ENCODE measurements at regions of chrX and their contacts with region 1.

Region 1: GRCh38 chrX:23901805-23902204 is 5.9 kb downstream of the APOO start:
- DNase-seq: peak; percentile 61
- H3K4me3 Mint-ChIP-seq: no peak overlapping the region
- H3K27ac Mint-ChIP-seq: no peak overlapping the region
- H3K4me1 Mint-ChIP-seq: peaks cover 11% of the 10 kb centered on the region
- H3K27me3 Mint-ChIP-seq: no peaks in the 10 kb centered on the region

Region 2: GRCh38 chrX:23694606-23695005 is 207.2 kb before region 1 on chrX:
- CTCF ChIA-PET with region 1: interaction called, 62 read pairs
- intact Hi-C with region 1: loop called (anchors 1 kb)
- DNase-seq: peak; percentile 55
- H3K4me3 Mint-ChIP-seq: no peak overlapping the region
- H3K27ac Mint-ChIP-seq: no peak overlapping the region
- H3K4me1 Mint-ChIP-seq: peaks cover 3% of the 10 kb centered on the region
- H3K27me3 Mint-ChIP-seq: no peaks in the 10 kb centered on the region

Region 3: DNA sequence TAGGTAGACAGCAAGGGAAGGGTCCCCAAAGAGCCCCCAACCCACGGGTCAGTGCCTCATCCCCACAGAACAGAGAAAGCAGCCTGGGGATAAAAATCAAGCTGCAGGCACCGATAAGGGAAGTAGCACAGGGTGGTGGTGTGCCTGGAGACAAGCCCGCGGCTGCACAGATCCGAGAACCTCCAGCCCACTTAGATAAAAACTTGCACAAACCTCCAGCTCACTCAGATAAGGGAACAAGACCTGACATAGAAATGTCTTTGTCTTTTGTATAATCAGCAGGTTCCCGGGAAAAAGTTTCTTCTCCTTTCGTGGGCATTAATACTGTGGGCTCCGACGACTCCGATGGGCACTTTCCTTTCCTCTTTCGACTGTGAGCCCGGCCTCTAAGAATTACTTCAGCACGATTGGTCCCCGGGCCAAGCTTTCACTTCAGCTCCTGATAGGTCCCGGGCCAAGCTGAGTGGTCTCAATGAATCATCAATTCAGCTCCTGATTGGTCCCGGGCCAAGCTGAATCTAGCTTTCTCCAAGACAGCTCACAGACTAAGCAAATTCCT is 202.1 kb before region 1 on chrX:
- CTCF ChIA-PET with region 1: interaction called, 54 read pairs
- intact Hi-C with region 1: loop called (anchors 1 kb)
- DNase-seq: peak; percentile 28
- H3K4me3 Mint-ChIP-seq: peak overlapping the region; percentile 53
- H3K27ac Mint-ChIP-seq: no peak overlapping the region
- H3K4me1 Mint-ChIP-seq: peaks cover 6% of the 10 kb centered on the region
- H3K27me3 Mint-ChIP-seq: no peaks in the 10 kb centered on the region

Region 4: GRCh38 chrX:23811108-23811651 is 90.6 kb before region 1 on chrX:
- CTCF ChIA-PET with region 1: interaction called, 3 read pairs
- intact Hi-C with region 1: loop called (anchors 1 kb)
- DNase-seq: peak; percentile 12
- H3K4me3 Mint-ChIP-seq: peak overlapping the region; percentile 6
- H3K27ac Mint-ChIP-seq: no peak overlapping the region
- H3K4me1 Mint-ChIP-seq: peaks cover 8% of the 10 kb centered on the region
- H3K27me3 Mint-ChIP-seq: no peaks in the 10 kb centered on the region

Region 5: DNA sequence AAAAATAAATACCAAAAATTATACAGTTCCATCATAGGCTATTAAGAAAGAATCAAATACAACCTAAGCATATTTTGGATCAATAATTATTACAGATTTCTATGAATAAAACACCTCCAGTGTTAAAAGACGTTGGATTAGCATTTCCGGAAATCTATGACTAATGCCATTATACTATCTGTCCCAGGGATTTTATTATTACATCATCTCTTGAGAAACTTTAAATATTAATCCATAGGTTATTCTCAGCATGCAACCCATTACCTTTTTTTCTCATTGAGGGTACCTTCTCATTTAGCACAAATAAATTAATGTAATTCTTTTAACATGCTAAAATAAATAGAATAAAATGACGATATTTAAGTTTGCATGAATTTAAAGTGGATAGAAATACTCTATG is 50.6 kb after region 1 on chrX:
- CTCF ChIA-PET with region 1: no interaction called
- intact Hi-C with region 1: no loop called
- DNase-seq: no peak
- H3K4me3 Mint-ChIP-seq: peak overlapping the region; percentile 18
- H3K27ac Mint-ChIP-seq: no peak overlapping the region
- H3K4me1 Mint-ChIP-seq: peaks cover 16% of the 10 kb centered on the region
- H3K27me3 Mint-ChIP-seq: no peaks in the 10 kb centered on the region

Region 6: DNA sequence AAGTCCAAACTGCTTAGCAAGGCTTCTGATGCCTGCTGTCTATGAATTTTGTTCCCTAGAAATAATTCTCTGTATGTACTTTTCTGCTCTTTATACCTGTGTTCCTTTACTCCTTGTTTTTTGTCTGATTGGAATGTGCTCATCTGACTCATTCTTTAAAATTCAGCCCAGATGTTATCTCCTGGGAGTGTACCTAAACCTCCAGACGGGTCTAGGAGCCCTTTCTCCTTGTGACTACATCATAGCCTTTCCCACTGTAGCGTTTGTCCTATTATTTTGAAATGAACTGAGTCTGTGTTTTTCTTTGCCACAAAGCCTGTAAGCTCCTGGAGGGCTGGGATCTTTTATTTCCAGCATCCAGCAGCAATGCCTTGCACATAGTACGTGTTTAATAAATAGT is 818.2 kb after region 1 on chrX:
- CTCF ChIA-PET with region 1: no interaction called
- intact Hi-C with region 1: no loop called
- DNase-seq: no peak
- H3K4me3 Mint-ChIP-seq: no peak overlapping the region
- H3K27ac Mint-ChIP-seq: no peak overlapping the region
- H3K4me1 Mint-ChIP-seq: no peaks in the 10 kb centered on the region
- H3K27me3 Mint-ChIP-seq: no peaks in the 10 kb centered on the region